ENCODE measurements at regions of chr16 and their contacts with region 1.

Region 1: GRCh38 chr16:18959031-18959505 is 24.7 kb upstream of the TMC7 start:
- DNase-seq: no peak
- ATAC-seq: peak; percentile 39 to 70 (median 54)
- H3K4me3 ChIP-seq: no peak overlapping the region
- H3K27ac ChIP-seq: peak overlapping the region; percentile 90
- H3K4me1 ChIP-seq: peaks cover 36% of the 10 kb centered on the region
- H3K27me3 ChIP-seq: no peaks in the 10 kb centered on the region
- CTCF ChIP-seq: no peak

Region 2: GRCh38 chr16:18932243-18932981 is 26.7 kb before region 1 on chr16:
- intact Hi-C with region 1: loop called in 1 of 2 experiments (anchors 2 kb)
- DNase-seq: no peak
- ATAC-seq: peak; percentile 56 to 86 (median 75)
- H3K4me3 ChIP-seq: peak overlapping the region; percentile 37
- H3K27ac ChIP-seq: peak overlapping the region; percentile 94
- H3K4me1 ChIP-seq: peaks cover 15% of the 10 kb centered on the region
- H3K27me3 ChIP-seq: no peaks in the 10 kb centered on the region
- CTCF ChIP-seq: no peak

Measured in psoas muscle (tissue), 8 donors.